ENCODE measurements at regions of chr16 and their contacts with region 1.

Region 1: DNA sequence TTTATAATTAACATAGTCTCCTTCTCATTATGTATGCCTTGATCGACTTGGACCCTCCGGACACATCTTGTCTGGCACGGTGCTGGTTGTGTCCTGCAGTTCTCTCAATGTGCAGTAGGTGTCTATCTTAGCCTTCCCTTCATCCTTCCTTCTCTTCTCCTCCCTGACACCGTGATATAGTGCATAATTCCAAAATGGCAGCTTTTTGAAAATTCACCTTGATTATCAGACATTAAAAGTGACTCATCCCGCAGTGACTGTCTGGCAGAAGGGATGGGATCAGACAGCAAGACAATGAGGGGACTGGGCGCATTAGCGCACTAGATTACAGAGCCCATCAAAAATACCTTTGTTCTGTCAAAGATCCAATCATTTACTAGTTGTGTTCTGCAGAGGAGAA is 70.0 kb upstream of the PMFBP1 start:
- DNase-seq: peak in 5 of 10 donors; percentile 7 to 41 (median 36)
- H3K4me3 ChIP-seq: peak overlapping the region in 32 of 59 donors; percentile 4 to 53 (median 32)
- H3K27ac ChIP-seq: peak overlapping the region in 1 of 59 donors; percentile 37
- H3K27me3 ChIP-seq: no peaks in the 10 kb centered on the region
- CTCF ChIP-seq: peak; percentile 43 to 92 (median 82)

Region 2: GRCh38 chr16:72124761-72125634 is 116.9 kb before region 1 on chr16:
- intact Hi-C with region 1: loop called in 1 of 2 experiments (anchors 5 kb)
- DNase-seq: peak; percentile 40 to 82 (median 62)
- H3K4me3 ChIP-seq: peak overlapping the region in 25 of 59 donors; percentile 1 to 49 (median 23)
- H3K27ac ChIP-seq: peak overlapping the region in 46 of 59 donors; percentile 2 to 82 (median 64)
- H3K27me3 ChIP-seq: no peaks in the 10 kb centered on the region
- CTCF ChIP-seq: peak; percentile 55 to 92 (median 83)

Region 3: DNA sequence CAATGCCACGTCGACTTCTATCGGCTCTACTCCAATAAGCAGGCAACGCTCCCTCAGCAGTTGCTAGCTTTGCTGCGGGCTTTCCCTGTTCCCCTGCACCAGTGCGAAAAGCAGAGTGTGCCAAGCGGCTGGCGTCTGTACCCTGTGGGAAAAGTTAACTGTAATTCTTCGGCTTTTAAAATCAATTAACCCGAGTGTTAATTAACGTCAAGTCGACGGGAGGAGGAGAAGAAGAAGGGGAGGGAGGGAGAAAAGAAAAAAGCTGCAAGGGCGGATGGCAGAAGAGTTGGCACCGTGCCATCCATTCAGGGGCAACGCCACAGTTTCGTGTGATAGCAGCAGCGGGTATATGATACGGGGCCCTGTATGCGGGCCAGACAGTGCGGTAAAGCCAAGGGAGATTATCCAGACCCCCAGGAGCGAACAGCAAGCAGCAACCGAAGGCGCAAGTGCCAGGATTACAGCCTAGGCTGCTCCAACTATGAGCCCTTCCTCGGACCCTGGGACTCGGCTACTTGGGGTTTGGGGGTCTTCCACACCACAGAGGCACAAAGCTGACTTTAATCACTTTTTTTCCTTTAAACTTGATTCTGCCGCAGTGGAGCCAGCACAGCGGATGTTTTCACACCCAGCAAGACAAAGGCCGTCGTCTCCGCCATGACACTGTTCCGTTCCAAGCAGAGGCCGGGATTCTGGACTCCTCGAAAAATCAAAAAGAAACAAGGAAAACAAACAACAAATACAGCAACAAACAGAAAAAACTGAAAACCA is 183.8 kb after region 1 on chr16:
- intact Hi-C with region 1: loop called in 1 of 2 experiments (anchors 5 kb)
- DNase-seq: peak; percentile 40 to 73 (median 62)
- H3K4me3 ChIP-seq: peak overlapping the region; percentile 25 to 76 (median 61)
- H3K27ac ChIP-seq: peak overlapping the region; percentile 70 to 99 (median 98)
- H3K27me3 ChIP-seq: peaks cover 0 to 5% (median 0%) of the 10 kb centered on the region in 45 donors
- CTCF ChIP-seq: peak in 5 of 56 donors; percentile 2 to 20 (median 14)

Region 4: DNA sequence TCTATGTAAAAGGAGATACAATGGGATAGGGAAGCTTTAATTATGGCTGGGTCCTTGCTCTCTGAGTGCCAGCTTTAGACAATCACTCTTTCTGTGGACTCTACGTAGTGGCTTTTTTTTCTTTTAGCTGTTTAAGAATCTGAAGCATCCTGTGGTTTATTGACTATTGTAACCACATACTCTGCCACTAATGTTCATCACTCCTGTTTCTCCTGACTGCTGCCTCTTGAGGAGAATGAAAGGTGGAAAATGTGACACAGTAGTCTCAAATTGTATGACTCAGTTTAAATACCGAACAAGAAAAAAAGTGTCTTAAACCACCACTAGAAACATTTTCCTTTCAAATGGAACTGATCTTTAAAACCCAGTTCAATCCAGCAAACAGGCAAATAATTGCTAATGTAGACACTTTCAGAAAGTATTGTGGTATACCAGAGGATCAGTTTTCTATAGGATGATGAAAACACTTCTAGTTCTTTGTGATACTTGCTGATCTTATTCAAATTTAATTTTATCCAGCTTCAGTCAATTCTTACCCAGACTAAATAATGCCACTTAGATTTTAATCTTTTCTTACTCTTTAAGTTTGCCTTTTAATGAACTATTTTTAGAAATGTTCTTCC is 232.7 kb after region 1 on chr16:
- intact Hi-C with region 1: loop called (anchors 5 to 10 kb)
- DNase-seq: no peak
- H3K4me3 ChIP-seq: peak overlapping the region in 6 of 59 donors; percentile 4 to 29 (median 12)
- H3K27ac ChIP-seq: no peak overlapping the region
- H3K27me3 ChIP-seq: no peaks in the 10 kb centered on the region
- CTCF ChIP-seq: no peak